Activated naive CD4-positive, alpha-beta T cell treated with anti-CD3 and anti-CD28 coated beads, Interleukin-2, amount 10 ng/mL, durations not matched to agents 7 days and 5 days (primary cell): ENCODE measurements at regions of chr20 and their contacts with region 1.

Region 1: GRCh38 chr20:62136283-62137091 is 6.7 kb downstream of the PSMA7 start:
- DNase-seq: peak; percentile 84
- H3K4me3 Mint-ChIP-seq: no peak overlapping the region
- H3K27ac Mint-ChIP-seq: peak overlapping the region; percentile 82
- H3K4me1 Mint-ChIP-seq: peaks cover 44% of the 10 kb centered on the region
- H3K27me3 Mint-ChIP-seq: no peaks in the 10 kb centered on the region

Region 2: DNA sequence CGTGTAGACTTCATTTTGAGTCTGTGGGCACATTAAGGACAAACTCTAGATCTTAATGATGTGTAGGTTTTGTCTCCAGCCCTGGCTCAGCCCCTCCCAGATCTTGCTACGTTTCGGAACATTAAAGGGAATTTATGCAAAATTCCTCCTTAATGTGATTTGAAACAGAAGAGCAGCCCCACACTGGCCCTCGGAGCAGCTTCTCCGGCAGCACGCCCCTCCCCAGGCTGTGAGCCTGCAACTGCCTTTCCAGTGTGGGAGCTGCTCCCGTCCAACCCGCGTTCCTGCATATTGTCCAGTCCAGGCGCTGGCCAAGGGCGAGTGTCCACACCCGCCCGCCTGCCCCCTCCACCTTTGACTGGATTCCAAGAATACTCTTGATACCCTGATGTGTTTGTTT is 328.0 kb before region 1 on chr20:
- CTCF ChIA-PET with region 1: no interaction called
- DNase-seq: no peak
- H3K4me3 Mint-ChIP-seq: no peak overlapping the region
- H3K27ac Mint-ChIP-seq: no peak overlapping the region
- H3K4me1 Mint-ChIP-seq: no peaks in the 10 kb centered on the region
- H3K27me3 Mint-ChIP-seq: peaks cover 15% of the 10 kb centered on the region

Region 3: GRCh38 chr20:62010551-62011402 is 125.7 kb before region 1 on chr20:
- CTCF ChIA-PET with region 1: interaction called, 21 read pairs
- DNase-seq: peak; percentile 76
- H3K4me3 Mint-ChIP-seq: no peak overlapping the region
- H3K27ac Mint-ChIP-seq: no peak overlapping the region
- H3K4me1 Mint-ChIP-seq: peaks cover 7% of the 10 kb centered on the region
- H3K27me3 Mint-ChIP-seq: no peaks in the 10 kb centered on the region

Region 4: GRCh38 chr20:62025832-62026563 is 110.5 kb before region 1 on chr20:
- CTCF ChIA-PET with region 1: interaction called, 13 read pairs
- DNase-seq: peak; percentile 38
- H3K4me3 Mint-ChIP-seq: no peak overlapping the region
- H3K27ac Mint-ChIP-seq: no peak overlapping the region
- H3K4me1 Mint-ChIP-seq: peaks cover 28% of the 10 kb centered on the region
- H3K27me3 Mint-ChIP-seq: no peaks in the 10 kb centered on the region

Region 5: GRCh38 chr20:62126141-62126699 is 10.3 kb before region 1 on chr20:
- CTCF ChIA-PET with region 1: interaction called, 12 read pairs
- DNase-seq: no peak
- H3K4me3 Mint-ChIP-seq: no peak overlapping the region
- H3K27ac Mint-ChIP-seq: no peak overlapping the region
- H3K4me1 Mint-ChIP-seq: peaks cover 37% of the 10 kb centered on the region
- H3K27me3 Mint-ChIP-seq: no peaks in the 10 kb centered on the region

Region 6: DNA sequence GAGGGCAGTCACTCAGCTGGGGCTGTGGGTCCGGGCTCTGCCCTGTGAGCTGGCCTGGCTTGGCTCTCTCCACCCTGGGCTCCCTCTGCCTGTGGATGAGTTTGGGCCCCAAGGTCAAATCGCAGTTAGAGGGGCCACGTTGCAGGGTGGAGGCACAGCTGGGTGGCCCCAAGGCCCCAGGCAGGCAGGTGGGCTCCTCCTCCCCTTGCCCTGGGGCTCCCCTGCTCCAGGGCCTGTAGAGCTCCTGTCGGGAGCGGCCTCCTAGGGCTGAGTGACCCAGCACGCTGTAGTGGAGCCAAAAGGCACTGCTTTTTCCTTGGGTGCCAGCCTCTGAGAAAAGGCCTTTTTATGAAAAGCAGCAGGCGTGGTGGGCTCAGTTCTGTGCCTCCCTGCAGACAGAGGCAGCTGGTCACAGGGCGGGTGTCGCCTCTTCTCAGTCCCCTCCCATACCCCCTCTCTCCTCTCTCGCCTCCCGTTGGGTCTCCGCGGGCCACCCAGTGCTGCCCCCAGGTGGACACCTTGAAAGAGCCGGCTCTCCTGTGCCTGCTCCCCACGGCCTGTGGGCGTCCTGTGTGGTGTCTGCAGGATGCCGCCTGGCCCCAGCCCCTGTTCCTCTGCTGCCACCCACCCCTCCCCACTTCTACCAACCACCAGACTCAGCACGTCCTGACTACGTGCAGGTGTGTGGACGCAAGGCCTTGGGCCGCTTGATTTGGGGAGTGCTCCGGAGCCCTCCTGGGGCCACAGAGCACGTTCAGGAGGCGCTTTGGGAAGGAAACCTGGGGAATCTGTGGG is 20.3 kb after region 1 on chr20:
- CTCF ChIA-PET with region 1: no interaction called
- DNase-seq: peak; percentile 84
- H3K4me3 Mint-ChIP-seq: no peak overlapping the region
- H3K27ac Mint-ChIP-seq: no peak overlapping the region
- H3K4me1 Mint-ChIP-seq: peaks cover 8% of the 10 kb centered on the region
- H3K27me3 Mint-ChIP-seq: no peaks in the 10 kb centered on the region